ENCODE measurements at regions of chr2 and their contacts with region 1.

Region 1: GRCh38 chr2:117723888-117724434 is 90.5 kb upstream of the DDX18 start:
- DNase-seq: no peak
- ATAC-seq: no peak
- H3K4me3 ChIP-seq: no peak overlapping the region
- H3K27ac ChIP-seq: no peak overlapping the region
- H3K4me1 ChIP-seq: no peaks in the 10 kb centered on the region
- H3K27me3 ChIP-seq: peaks cover 25% of the 10 kb centered on the region
- CTCF ChIP-seq: no peak

Region 2: GRCh38 chr2:117703858-117704257 is 20.1 kb before region 1 on chr2:
- CTCF ChIA-PET with region 1: no interaction called
- POLR2A ChIA-PET with region 1: no interaction called
- intact Hi-C with region 1: loop called (anchors 1 kb)
- DNase-seq: no peak
- ATAC-seq: no peak
- H3K4me3 ChIP-seq: no peak overlapping the region
- H3K27ac ChIP-seq: no peak overlapping the region
- H3K4me1 ChIP-seq: no peaks in the 10 kb centered on the region
- H3K27me3 ChIP-seq: peaks cover 12% of the 10 kb centered on the region
- CTCF ChIP-seq: no peak

Region 3: GRCh38 chr2:118040891-118041290 is 316.9 kb after region 1 on chr2:
- CTCF ChIA-PET with region 1: no interaction called
- POLR2A ChIA-PET with region 1: no interaction called
- intact Hi-C with region 1: no loop called
- DNase-seq: no peak
- ATAC-seq: no peak
- H3K4me3 ChIP-seq: no peak overlapping the region
- H3K27ac ChIP-seq: no peak overlapping the region
- H3K4me1 ChIP-seq: peaks cover 10% of the 10 kb centered on the region
- H3K27me3 ChIP-seq: no peaks in the 10 kb centered on the region
- CTCF ChIP-seq: no peak